CD8-positive, alpha-beta memory T cell (primary cell): ENCODE measurements at regions of chr10 and their contacts with region 1.

Region 1: GRCh38 chr10:72260588-72261322 is 13.0 kb upstream of the DDIT4 start:
- DNase-seq: peak; percentile 73 to 87 (median 78)
- H3K4me3 ChIP-seq: peak overlapping the region; percentile 72
- H3K4me3 Mint-ChIP-seq: peak overlapping the region; percentile 81 to 94 (median 89)
- H3K27ac ChIP-seq: peak overlapping the region; percentile 89
- H3K27ac Mint-ChIP-seq: peak overlapping the region; percentile 92 to 99 (median 97)
- H3K4me1 ChIP-seq: peaks cover 83% of the 10 kb centered on the region
- H3K4me1 Mint-ChIP-seq: peaks cover 52 to 64% (median 63%) of the 10 kb centered on the region in 3 donors
- H3K27me3 ChIP-seq: no peaks in the 10 kb centered on the region
- H3K27me3 Mint-ChIP-seq: no peaks in the 10 kb centered on the region

Region 2: GRCh38 chr10:72248468-72249151 is 12.1 kb before region 1 on chr10:
- CTCF ChIA-PET with region 1: interaction called, 28 read pairs
- POLR2A ChIA-PET with region 1: interaction called, 10 read pairs
- DNase-seq: peak; percentile 46 to 89 (median 80)
- H3K4me3 ChIP-seq: peak overlapping the region; percentile 55
- H3K4me3 Mint-ChIP-seq: peak overlapping the region; percentile 68 to 93 (median 84)
- H3K27ac ChIP-seq: peak overlapping the region; percentile 47
- H3K27ac Mint-ChIP-seq: peak overlapping the region; percentile 90 to 98 (median 95)
- H3K4me1 ChIP-seq: peaks cover 94% of the 10 kb centered on the region
- H3K4me1 Mint-ChIP-seq: peaks cover 61 to 88% (median 85%) of the 10 kb centered on the region in 3 donors
- H3K27me3 ChIP-seq: no peaks in the 10 kb centered on the region
- H3K27me3 Mint-ChIP-seq: no peaks in the 10 kb centered on the region

Region 3: GRCh38 chr10:72353965-72354477 is 93.3 kb after region 1 on chr10:
- CTCF ChIA-PET with region 1: no interaction called
- POLR2A ChIA-PET with region 1: no interaction called
- DNase-seq: no peak
- H3K4me3 ChIP-seq: peak overlapping the region; percentile 99
- H3K4me3 Mint-ChIP-seq: peak overlapping the region; percentile 91 to 100 (median 99)
- H3K27ac ChIP-seq: peak overlapping the region; percentile 98
- H3K27ac Mint-ChIP-seq: peak overlapping the region; percentile 93 to 99 (median 97)
- H3K4me1 ChIP-seq: peaks cover 21% of the 10 kb centered on the region
- H3K4me1 Mint-ChIP-seq: peaks cover 47 to 63% (median 49%) of the 10 kb centered on the region in 3 donors
- H3K27me3 ChIP-seq: no peaks in the 10 kb centered on the region
- H3K27me3 Mint-ChIP-seq: no peaks in the 10 kb centered on the region

Region 4: GRCh38 chr10:72364239-72364777 is 103.6 kb after region 1 on chr10:
- CTCF ChIA-PET with region 1: no interaction called
- POLR2A ChIA-PET with region 1: no interaction called
- DNase-seq: peak; percentile 74 to 90 (median 81)
- H3K4me3 ChIP-seq: no peak overlapping the region
- H3K4me3 Mint-ChIP-seq: peak overlapping the region in 6 of 7 donors; percentile 2 to 80 (median 53)
- H3K27ac ChIP-seq: no peak overlapping the region
- H3K27ac Mint-ChIP-seq: peak overlapping the region in 6 of 8 donors; percentile 0 to 71 (median 42)
- H3K4me1 ChIP-seq: peaks cover 10% of the 10 kb centered on the region
- H3K4me1 Mint-ChIP-seq: peaks cover 24 to 42% (median 31%) of the 10 kb centered on the region in 3 donors
- H3K27me3 ChIP-seq: no peaks in the 10 kb centered on the region
- H3K27me3 Mint-ChIP-seq: no peaks in the 10 kb centered on the region

Region 5: DNA sequence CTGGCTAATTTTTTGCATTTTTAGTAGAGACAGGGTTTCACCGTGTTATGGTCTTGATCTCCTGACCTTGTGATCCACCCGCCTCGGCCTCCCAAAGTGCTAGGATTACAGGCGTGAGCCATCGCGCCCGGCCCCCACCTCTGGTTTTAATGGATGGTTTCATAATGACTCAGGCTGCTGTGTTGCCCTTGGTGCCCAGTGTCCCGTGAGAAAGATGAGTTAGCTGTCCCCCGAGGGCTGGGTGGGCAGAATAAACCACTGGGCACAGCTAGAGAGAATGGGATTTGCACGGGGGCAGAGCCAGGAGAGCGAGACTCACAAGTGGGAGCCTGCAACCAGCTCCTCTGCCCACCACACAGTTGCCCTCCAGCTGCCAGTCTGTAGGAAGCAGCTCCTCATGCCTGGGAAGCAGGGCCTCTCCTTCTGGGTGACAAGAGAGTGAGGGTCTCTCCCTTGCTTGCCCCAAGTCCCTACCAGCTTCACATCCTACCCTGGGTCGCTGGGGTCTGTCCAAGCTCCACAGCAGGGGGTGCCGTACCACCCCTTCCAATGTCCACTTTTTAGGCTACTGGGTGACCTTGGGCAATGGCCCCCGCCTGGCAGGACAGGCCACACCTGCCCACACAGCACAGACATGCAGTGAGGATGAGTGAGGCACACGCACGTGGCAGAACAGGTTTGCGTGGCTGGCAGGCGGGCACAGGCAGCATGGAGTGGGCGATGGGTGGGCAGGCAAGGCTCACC is 1566.8 kb after region 1 on chr10:
- CTCF ChIA-PET with region 1: no interaction called
- POLR2A ChIA-PET with region 1: interaction called, 19 read pairs
- DNase-seq: no peak
- H3K4me3 ChIP-seq: no peak overlapping the region
- H3K4me3 Mint-ChIP-seq: no peak overlapping the region
- H3K27ac ChIP-seq: no peak overlapping the region
- H3K27ac Mint-ChIP-seq: peak overlapping the region in 1 of 8 donors; percentile 55
- H3K4me1 ChIP-seq: no peaks in the 10 kb centered on the region
- H3K4me1 Mint-ChIP-seq: peaks cover 0 to under 1% (median 0%) of the 10 kb centered on the region in 3 donors
- H3K27me3 ChIP-seq: no peaks in the 10 kb centered on the region
- H3K27me3 Mint-ChIP-seq: no peaks in the 10 kb centered on the region